Activated naive CD8-positive, alpha-beta T cell treated with anti-CD3 and anti-CD28 coated beads, Interleukin-2, amount 10 ng/mL, durations not matched to agents 7 days and 5 days (primary cell): ENCODE measurements at regions of chr17 and their contacts with region 1.

Region 1: GRCh38 chr17:41930009-41930832 is at the start of gene ODAD4:
- DNase-seq: peak; percentile 95
- ATAC-seq: peak; percentile 99
- H3K4me3 Mint-ChIP-seq: peak within 1 kb of the TSS; percentile 95
- H3K27ac Mint-ChIP-seq: peak within 1 kb of the TSS; percentile 96
- H3K4me1 Mint-ChIP-seq: peaks cover 41% of the 10 kb centered on the region
- H3K27me3 Mint-ChIP-seq: no peaks in the 10 kb centered on the region
- total RNA-seq, gene ODAD4: 0.65 to 0.72 TPM

Region 2: DNA sequence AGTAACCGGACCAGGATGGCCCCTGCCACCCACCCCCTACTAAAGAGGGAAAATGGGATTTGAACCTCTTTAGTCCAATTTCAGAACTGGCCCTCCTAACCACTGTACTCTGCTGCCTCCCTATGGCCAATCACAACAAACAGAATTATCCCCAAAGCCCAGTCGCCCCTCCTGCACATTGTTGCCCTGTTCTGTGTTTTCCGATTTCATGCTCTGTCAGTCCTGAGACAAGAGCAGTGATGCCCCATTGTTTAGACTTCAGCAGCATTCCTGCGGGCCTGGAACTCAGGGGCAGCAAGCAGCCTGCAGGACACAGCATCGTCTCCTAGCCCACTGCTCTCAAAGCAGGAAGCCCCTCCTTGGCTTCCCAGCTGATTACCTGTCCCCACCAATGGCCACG is 44.5 kb before region 1 on chr17:
- POLR2A ChIA-PET with region 1: no interaction called
- DNase-seq: no peak
- ATAC-seq: no peak
- H3K4me3 Mint-ChIP-seq: no peak overlapping the region
- H3K27ac Mint-ChIP-seq: no peak overlapping the region
- H3K4me1 Mint-ChIP-seq: no peaks in the 10 kb centered on the region
- H3K27me3 Mint-ChIP-seq: no peaks in the 10 kb centered on the region

Region 3: DNA sequence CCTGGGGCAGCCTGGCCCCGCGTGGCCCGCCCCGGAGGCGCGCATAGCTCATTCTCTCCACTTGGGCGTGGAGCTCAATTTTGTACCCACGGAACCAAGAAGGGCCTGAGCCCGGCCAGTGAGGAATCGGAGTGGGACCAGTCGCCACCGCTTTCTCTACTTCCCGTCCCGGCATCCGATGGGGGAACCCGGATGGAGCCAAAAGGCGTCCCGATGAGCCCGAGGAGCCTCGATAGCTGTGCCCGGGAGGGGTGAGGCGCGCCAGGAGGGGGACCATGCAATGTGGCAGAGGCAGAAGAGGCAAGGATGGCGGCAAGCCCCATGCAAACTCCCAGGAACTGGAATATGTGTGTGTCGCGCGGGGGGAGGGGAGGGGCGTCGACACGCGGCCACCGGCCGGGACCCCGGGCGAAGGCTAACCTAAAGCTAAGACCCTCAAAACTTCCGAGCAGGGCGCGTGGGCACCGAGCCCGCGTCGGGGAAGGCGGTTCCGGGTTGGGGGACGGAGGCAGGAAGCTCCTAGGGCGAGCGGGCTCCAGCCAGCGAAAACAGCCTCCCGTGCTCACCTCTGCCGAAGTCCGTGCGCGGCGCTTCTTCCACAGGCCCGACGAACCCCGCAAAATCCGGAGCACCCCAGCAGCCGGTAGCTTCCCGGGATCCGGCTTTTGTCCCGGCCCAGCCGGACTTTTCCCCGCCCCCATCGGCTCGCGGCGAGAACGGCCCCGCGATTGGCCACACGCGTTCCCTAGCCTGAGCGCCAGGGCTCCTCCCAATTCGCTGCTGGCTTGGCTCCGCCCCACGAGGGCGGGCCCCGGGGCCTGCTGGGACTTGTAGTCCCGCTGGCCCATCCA is 11.7 kb before region 1 on chr17 and contains the start of gene ACLY:
- POLR2A ChIA-PET with region 1: interaction called, 78 read pairs
- DNase-seq: peak; percentile 99
- ATAC-seq: peak; percentile 95
- H3K4me3 Mint-ChIP-seq: peak within 1 kb of the TSS; percentile 98
- H3K27ac Mint-ChIP-seq: peak within 1 kb of the TSS; percentile 97
- H3K4me1 Mint-ChIP-seq: peaks cover 30% of the 10 kb centered on the region
- H3K27me3 Mint-ChIP-seq: no peaks in the 10 kb centered on the region
- total RNA-seq, gene ACLY: 142 to 153 TPM

Region 4: DNA sequence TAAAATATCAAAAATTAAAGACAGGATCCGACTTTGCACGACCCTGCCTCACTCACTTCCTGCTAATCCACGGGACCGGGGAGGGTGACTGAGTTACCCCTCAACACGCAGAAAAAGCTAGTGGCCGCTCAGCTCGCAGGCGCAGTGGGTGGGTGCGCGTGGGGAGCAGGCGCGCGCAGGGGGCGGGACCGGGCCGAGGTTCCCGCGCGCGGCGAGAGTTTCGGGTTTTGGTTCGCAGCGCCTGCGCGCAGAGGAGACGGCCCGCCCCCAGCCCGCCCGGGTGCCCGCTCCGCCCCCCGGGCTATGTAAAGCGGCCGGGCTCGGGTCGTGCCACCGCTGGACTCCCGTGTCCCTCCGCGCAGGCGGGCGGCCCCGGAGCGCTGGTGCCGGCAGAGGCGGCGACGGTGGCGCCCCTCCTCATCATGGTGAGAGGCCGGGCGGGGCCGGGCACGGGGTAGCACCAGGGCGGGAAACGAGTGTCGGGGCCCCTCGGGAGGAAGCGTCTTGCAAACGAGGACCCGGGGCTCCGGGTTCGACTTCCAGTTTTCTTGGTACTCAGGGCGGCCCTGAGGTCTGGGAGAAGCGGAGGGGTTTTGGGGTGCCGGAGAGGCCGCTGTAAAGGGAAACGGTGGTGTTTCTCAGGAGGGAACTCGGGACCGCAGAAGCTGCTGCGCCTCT is 36.4 kb after region 1 on chr17 and contains the start of gene CNP:
- POLR2A ChIA-PET with region 1: interaction called, 18 read pairs
- DNase-seq: peak; percentile 96
- ATAC-seq: peak; percentile 77
- H3K4me3 Mint-ChIP-seq: peak within 1 kb of the TSS; percentile 87
- H3K27ac Mint-ChIP-seq: peak within 1 kb of the TSS; percentile 86
- H3K4me1 Mint-ChIP-seq: peaks cover 28% of the 10 kb centered on the region
- H3K27me3 Mint-ChIP-seq: peaks cover 2% of the 10 kb centered on the region
- total RNA-seq, gene CNP: 75.8 to 83.0 TPM